Heart left ventricle (tissue), 16 donors: ENCODE measurements at regions of chr7 and their contacts with region 1.

Region 1: DNA sequence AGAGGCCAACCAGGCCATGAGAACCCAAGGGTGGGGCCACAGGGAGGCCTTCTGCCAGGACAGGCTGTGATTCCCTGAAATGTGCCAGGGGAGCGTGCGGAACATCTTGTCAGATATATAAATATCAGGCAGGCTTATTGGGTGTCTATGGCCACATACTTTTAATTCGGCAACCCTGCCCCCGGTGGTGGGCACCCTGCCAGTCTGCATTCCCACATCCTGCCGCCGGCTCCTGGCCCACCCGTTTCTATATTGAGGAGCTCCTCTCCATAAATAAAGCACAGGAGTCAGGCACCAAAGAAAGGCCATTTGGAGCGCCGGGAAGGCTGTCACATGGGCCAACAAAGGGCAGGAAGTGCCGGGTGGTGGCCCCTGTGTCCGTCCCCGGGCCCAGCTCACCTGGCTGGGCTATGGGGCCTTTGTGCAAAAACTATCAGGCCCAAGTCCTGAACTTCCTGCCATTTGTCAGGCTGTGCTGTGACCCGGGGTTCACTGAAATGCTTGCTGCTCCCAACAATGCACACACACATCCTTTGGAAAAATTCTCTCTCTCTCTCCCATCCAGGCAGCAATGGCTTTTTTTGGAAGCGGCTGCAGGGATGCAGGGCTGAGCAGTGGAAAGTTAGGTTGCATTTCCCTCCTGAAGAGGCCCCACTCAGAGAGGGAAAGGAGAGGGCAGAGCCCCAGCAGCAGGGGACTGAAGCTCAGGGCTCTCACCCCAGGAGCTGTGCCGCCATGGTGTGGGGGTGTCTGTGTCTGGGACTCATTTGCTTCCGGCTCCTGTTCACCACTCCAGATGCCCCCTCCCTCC is 25.0 kb upstream of the PODXL start:
- DNase-seq: peak; percentile 86 to 93 (median 87)
- ATAC-seq: peak; percentile 88 to 94 (median 92)
- H3K4me3 ChIP-seq: no peak overlapping the region
- H3K27ac ChIP-seq: peak overlapping the region; percentile 76 to 95 (median 83)
- H3K4me1 ChIP-seq: peaks cover 0 to 37% (median 25%) of the 10 kb centered on the region in 12 donors
- H3K27me3 ChIP-seq: no peaks in the 10 kb centered on the region
- CTCF ChIP-seq: peak in 9 of 12 donors; percentile 10 to 43 (median 18)
- POLR2A ChIP-seq: no peak

Region 2: GRCh38 chr7:131493581-131493980 is 87.9 kb before region 1 on chr7:
- intact Hi-C with region 1: no loop called
- DNase-seq: no peak
- ATAC-seq: no peak
- H3K4me3 ChIP-seq: no peak overlapping the region
- H3K27ac ChIP-seq: no peak overlapping the region
- H3K4me1 ChIP-seq: peaks cover 0 to 16% (median 3%) of the 10 kb centered on the region in 12 donors
- H3K27me3 ChIP-seq: no peaks in the 10 kb centered on the region
- CTCF ChIP-seq: no peak
- POLR2A ChIP-seq: no peak

Region 3: GRCh38 chr7:131619336-131620305 is 38.2 kb after region 1 on chr7:
- intact Hi-C with region 1: loop called in 6 of 10 experiments (anchors 1 to 5 kb)
- DNase-seq: no peak
- ATAC-seq: peak in 1 of 4 donors; percentile 4
- H3K4me3 ChIP-seq: no peak overlapping the region
- H3K27ac ChIP-seq: peak overlapping the region in 6 of 12 donors; percentile 1 to 78 (median 52)
- H3K4me1 ChIP-seq: peaks cover 8 to 56% (median 45%) of the 10 kb centered on the region in 12 donors
- H3K27me3 ChIP-seq: no peaks in the 10 kb centered on the region
- CTCF ChIP-seq: no peak
- POLR2A ChIP-seq: no peak

Region 4: DNA sequence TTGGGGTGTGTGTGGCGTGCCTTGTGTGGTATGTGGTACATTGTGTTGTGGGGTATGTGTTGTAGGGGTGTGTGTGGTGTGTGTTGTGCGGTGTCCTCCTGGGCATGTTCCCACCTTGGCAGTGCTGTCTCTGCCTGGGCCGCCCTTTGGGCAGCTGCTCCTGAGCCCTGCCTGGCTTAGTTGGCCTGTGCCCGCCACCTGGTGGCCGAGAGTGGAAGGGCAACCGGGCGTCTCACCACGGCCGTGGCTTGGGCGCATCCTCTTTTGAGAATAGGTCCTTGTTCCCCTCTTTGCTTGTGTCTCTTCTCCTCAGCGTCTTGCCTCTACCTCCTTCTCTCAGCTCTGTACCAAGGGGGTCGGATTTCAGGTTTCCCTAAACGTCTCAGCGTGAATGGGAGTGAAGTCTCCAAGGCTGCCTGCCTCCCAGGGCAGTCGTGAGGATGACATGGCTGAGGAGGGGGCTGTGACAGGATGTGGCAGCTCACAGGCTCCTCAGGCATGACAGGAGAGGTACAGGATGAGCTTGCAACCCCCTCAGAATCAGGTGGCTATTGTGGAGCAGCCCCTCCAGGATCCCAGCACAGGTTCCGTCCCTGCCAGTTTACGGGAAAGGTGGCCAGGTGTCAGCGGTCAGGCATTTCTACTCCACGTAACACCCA is 73.4 kb after region 1 on chr7:
- intact Hi-C with region 1: loop called in 2 of 10 experiments (anchors 2 to 10 kb)
- DNase-seq: peak; percentile 85 to 92 (median 89)
- ATAC-seq: peak; percentile 82 to 89 (median 86)
- H3K4me3 ChIP-seq: no peak overlapping the region
- H3K27ac ChIP-seq: no peak overlapping the region
- H3K4me1 ChIP-seq: peaks cover 0 to 23% (median 8%) of the 10 kb centered on the region in 12 donors
- H3K27me3 ChIP-seq: no peaks in the 10 kb centered on the region
- CTCF ChIP-seq: peak; percentile 84 to 94 (median 88)
- POLR2A ChIP-seq: no peak